ENCODE measurements at regions of chr2 and their contacts with region 1.

Region 1: DNA sequence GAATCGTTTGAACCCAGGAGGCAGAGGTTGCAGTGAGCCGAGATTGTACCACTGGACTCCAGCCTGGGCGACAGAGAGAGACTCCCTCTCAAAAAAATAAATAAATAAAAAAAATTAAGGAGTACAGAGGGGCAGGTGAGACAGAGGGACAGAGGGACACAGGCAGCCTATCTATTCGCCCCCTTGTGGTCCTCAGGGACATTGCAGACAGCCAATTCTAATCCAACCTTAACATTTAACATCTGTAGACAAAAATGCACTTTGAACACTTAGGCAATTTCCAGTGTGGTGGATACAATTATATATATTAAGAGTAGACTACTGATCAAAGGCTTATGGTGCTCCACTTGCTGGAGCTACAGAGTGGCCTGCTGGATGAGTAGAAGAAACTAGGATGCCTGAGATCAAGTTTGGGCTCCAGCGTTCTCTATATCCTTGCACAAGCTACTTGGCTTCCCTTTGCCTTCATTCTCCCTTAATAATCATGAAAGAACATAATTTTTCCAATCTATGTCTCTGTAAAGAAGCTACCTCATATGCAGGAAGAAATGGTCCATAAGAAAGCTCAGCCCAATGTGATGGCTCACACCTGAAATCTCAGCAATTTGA is 8.2 kb upstream of the SMARCAL1 start:
- DNase-seq: peak in 1 of 2 donors; percentile 16
- ATAC-seq: peak in 4 of 8 donors; percentile 44 to 73 (median 66)
- H3K4me3 ChIP-seq: no peak overlapping the region
- H3K27ac ChIP-seq: no peak overlapping the region
- H3K4me1 ChIP-seq: peaks cover 0 to 8% (median 0%) of the 10 kb centered on the region in 9 donors
- H3K27me3 ChIP-seq: peaks cover 0 to 18% (median 5%) of the 10 kb centered on the region in 7 donors
- CTCF ChIP-seq: peak; percentile 62 to 86 (median 82)

Region 2: DNA sequence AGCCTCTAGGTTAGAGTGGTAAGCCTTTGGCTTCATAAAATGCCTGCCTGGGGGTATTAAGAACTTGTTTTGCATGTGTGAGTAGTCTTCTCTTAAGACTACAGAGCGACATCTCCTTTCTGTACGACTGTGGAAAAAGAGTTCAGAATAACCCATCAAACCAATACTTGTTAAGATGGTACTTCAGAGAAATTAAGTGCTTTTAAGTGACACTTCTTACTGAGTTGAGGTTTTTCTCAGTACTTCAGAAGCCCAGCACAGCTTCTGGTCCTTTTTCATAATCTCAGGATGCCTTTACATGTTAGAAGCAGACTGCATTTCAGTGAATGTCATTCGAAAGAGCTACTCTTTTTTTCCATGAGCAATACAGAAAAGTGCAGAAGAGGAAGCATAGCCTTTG is 284.1 kb before region 1 on chr2:
- intact Hi-C with region 1: loop called in 1 of 10 experiments (anchors 10 kb)
- DNase-seq: no peak
- ATAC-seq: no peak
- H3K4me3 ChIP-seq: no peak overlapping the region
- H3K27ac ChIP-seq: no peak overlapping the region
- H3K4me1 ChIP-seq: peaks cover 0 to 43% (median 12%) of the 10 kb centered on the region in 9 donors
- H3K27me3 ChIP-seq: no peaks in the 10 kb centered on the region
- CTCF ChIP-seq: no peak

Region 3: DNA sequence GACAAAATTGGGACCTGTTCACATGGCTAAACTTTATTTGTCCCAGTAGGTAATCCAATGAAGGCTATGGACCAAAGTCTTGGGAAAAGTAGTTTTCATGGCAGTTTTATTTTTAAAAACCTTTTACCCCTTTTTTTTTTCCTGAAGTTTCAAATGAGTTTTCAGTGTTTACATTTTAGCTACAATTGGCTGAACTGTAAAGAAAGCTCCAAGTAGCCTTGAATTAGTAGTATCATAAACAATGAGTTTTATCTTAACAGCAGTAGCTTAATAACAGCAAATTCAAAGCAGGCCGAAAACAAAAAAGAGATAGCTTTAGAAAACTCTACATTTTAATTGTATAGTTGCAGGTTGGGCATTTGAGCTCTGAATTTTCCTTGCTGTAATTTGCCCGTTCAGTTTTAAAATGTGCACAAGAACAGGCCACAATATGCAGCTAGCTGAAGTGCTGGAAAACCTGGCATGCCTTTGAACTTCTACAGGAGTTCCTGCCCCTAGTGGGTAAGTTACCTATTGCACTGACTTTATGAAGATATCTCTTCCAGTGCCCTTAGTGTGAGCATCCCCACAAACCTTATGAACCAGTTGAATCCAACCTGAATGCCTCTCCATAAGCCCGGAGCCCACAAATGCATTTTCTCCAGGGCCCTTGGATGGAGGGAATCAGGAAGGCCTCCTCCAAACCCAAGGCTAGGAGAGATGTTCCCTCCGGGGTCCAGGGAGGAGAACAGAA is 188.3 kb before region 1 on chr2:
- intact Hi-C with region 1: loop called in 3 of 10 experiments (anchors 5 to 10 kb)
- DNase-seq: no peak
- ATAC-seq: no peak
- H3K4me3 ChIP-seq: no peak overlapping the region
- H3K27ac ChIP-seq: no peak overlapping the region
- H3K4me1 ChIP-seq: peaks cover 0 to 29% (median 8%) of the 10 kb centered on the region in 9 donors
- H3K27me3 ChIP-seq: no peaks in the 10 kb centered on the region
- CTCF ChIP-seq: peak in 1 of 9 donors; percentile 5

Region 4: GRCh38 chr2:216222650-216223352 is 181.3 kb before region 1 on chr2:
- intact Hi-C with region 1: loop called in 3 of 10 experiments (anchors 5 to 10 kb)
- DNase-seq: no peak
- ATAC-seq: no peak
- H3K4me3 ChIP-seq: no peak overlapping the region
- H3K27ac ChIP-seq: no peak overlapping the region
- H3K4me1 ChIP-seq: peaks cover 0 to 11% (median 5%) of the 10 kb centered on the region in 9 donors
- H3K27me3 ChIP-seq: no peaks in the 10 kb centered on the region
- CTCF ChIP-seq: peak in 4 of 9 donors; percentile 7 to 35 (median 22)